HepG2 (cell line): ENCODE measurements at regions of chr17 and their contacts with region 1.

Region 1: GRCh38 chr17:59619293-59620063 is at the start of gene CLTC:
- DNase-seq: peak; percentile 97
- ATAC-seq: peak; percentile 95
- H3K4me3 ChIP-seq: peak within 1 kb of the TSS; percentile 94 to 99 (median 94)
- H3K27ac ChIP-seq: peak within 1 kb of the TSS; percentile 97
- H3K4me1 ChIP-seq: peaks cover 47% of the 10 kb centered on the region
- H3K27me3 ChIP-seq: no peaks in the 10 kb centered on the region; a peak in 2 of 5 replicates
- CTCF ChIP-seq: peak; percentile 21; the same call in 1 of the 2 replicates
- EP300 ChIP-seq: peak; percentile 64 to 84
- POLR2A ChIP-seq: peak; percentile 78 to 97
- RAD21 ChIP-seq: peak; percentile 44
- total RNA-seq, gene CLTC: 283 and 643 TPM in 2 replicates

Region 2: GRCh38 chr17:59464246-59464645 is 155.2 kb before region 1 on chr17:
- CTCF ChIA-PET with region 1: no interaction called
- POLR2A ChIA-PET with region 1: interaction called, 7 read pairs
- in situ Hi-C with region 1: no loop called
- intact Hi-C with region 1: loop called (anchors 2 kb)
- DNase-seq: no peak
- ATAC-seq: no peak
- H3K4me3 ChIP-seq: no peak overlapping the region
- H3K27ac ChIP-seq: peak overlapping the region; percentile 70
- H3K4me1 ChIP-seq: peaks cover 78% of the 10 kb centered on the region
- H3K27me3 ChIP-seq: no peaks in the 10 kb centered on the region
- CTCF ChIP-seq: no peak
- EP300 ChIP-seq: no peak
- POLR2A ChIP-seq: no peak
- RAD21 ChIP-seq: no peak

Region 3: GRCh38 chr17:59565171-59565969 is 54.1 kb before region 1 on chr17 and contains the start of gene DHX40:
- CTCF ChIA-PET with region 1: no interaction called
- POLR2A ChIA-PET with region 1: interaction called, 17 read pairs
- in situ Hi-C with region 1: no loop called
- intact Hi-C with region 1: no loop called
- DNase-seq: peak; percentile 82
- ATAC-seq: peak; percentile 73
- H3K4me3 ChIP-seq: peak within 1 kb of the TSS; percentile 88 to 95 (median 88)
- H3K27ac ChIP-seq: peak within 1 kb of the TSS; percentile 29
- H3K4me1 ChIP-seq: peaks cover 16% of the 10 kb centered on the region
- H3K27me3 ChIP-seq: no peaks in the 10 kb centered on the region; a peak in 1 of 5 replicates
- CTCF ChIP-seq: no peak; the same call in none of the 2 replicates
- EP300 ChIP-seq: 0 out of 4 replicates have a peak, but pooled peaks of 1 of the 2 experiments have one; percentile 30
- POLR2A ChIP-seq: peak; percentile 61 to 68; a peak in 3 of 4 replicates
- RAD21 ChIP-seq: no peak
- total RNA-seq, gene DHX40: 37.0 and 62.6 TPM in 2 replicates

Region 4: DNA sequence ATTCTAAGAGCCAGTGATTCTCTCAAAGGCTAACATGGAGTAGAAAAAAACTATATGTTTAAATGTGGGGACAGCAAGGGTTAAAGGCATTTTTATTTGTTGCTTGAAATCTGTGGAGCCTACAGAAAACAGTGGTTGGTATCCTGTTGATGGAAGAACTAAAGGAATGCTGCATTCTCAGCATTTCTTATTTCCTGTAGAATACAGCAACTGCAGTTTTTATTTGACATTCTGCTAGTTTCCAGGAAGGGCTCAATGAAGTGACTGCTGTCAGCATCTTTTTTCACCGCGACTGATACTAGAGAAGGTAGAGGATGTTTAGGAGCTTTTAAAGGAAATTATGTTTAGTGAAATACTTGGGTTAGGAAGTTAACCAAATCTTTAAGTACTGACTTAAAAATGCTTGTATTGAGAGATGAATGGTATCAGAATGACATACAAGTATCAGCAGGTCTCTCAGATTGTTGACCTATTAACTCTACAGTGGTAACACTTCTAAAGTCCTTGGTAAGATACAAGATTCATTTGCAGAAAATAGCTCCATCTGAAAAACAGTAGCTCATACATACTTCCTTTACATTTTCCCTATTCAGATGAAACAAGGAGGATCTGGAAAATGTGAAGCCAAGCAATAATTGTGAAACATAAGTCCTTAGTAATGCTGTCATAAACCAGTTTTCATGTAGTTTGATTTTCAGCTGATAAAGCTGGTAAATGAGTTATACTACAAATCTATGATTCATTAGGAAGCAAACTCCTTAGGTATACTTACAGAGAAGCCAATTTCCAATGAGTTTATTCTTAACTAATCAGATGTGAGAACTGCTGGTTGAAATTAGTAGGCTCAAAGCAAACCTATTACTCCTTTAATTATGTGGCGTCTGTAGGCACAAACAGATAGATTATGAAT is 15.4 kb after region 1 on chr17:
- CTCF ChIA-PET with region 1: no interaction called
- POLR2A ChIA-PET with region 1: interaction called, 17 read pairs
- in situ Hi-C with region 1: no loop called
- intact Hi-C with region 1: no loop called
- DNase-seq: no peak
- ATAC-seq: no peak
- H3K4me3 ChIP-seq: no peak overlapping the region
- H3K27ac ChIP-seq: no peak overlapping the region
- H3K4me1 ChIP-seq: peaks cover 37% of the 10 kb centered on the region; the same call in 1 of the 2 replicates
- H3K27me3 ChIP-seq: no peaks in the 10 kb centered on the region
- CTCF ChIP-seq: no peak
- EP300 ChIP-seq: no peak
- POLR2A ChIP-seq: no peak
- RAD21 ChIP-seq: no peak

Region 5: GRCh38 chr17:59651346-59651745 is 31.9 kb after region 1 on chr17:
- CTCF ChIA-PET with region 1: no interaction called
- POLR2A ChIA-PET with region 1: no interaction called
- in situ Hi-C with region 1: no loop called
- intact Hi-C with region 1: no loop called
- DNase-seq: no peak
- ATAC-seq: no peak
- H3K4me3 ChIP-seq: no peak overlapping the region
- H3K27ac ChIP-seq: no peak overlapping the region
- H3K4me1 ChIP-seq: no peaks in the 10 kb centered on the region
- H3K27me3 ChIP-seq: no peaks in the 10 kb centered on the region
- CTCF ChIP-seq: no peak
- EP300 ChIP-seq: no peak
- POLR2A ChIP-seq: no peak
- RAD21 ChIP-seq: no peak

Region 6: GRCh38 chr17:59815965-59816364 is 196.5 kb after region 1 on chr17:
- CTCF ChIA-PET with region 1: no interaction called
- POLR2A ChIA-PET with region 1: no interaction called
- in situ Hi-C with region 1: no loop called
- intact Hi-C with region 1: no loop called
- DNase-seq: no peak
- ATAC-seq: no peak
- H3K4me3 ChIP-seq: no peak overlapping the region
- H3K27ac ChIP-seq: no peak overlapping the region
- H3K4me1 ChIP-seq: peaks cover 10% of the 10 kb centered on the region
- H3K27me3 ChIP-seq: no peaks in the 10 kb centered on the region
- CTCF ChIP-seq: no peak
- EP300 ChIP-seq: no peak
- POLR2A ChIP-seq: no peak
- RAD21 ChIP-seq: no peak

Region 7: GRCh38 chr17:60463157-60463835 is 843.8 kb after region 1 on chr17:
- CTCF ChIA-PET with region 1: no interaction called
- POLR2A ChIA-PET with region 1: no interaction called
- in situ Hi-C with region 1: no loop called
- intact Hi-C with region 1: no loop called
- DNase-seq: no peak
- ATAC-seq: no peak
- H3K4me3 ChIP-seq: no peak overlapping the region
- H3K27ac ChIP-seq: no peak overlapping the region
- H3K4me1 ChIP-seq: no peaks in the 10 kb centered on the region
- H3K27me3 ChIP-seq: no peaks in the 10 kb centered on the region
- CTCF ChIP-seq: no peak
- EP300 ChIP-seq: no peak
- POLR2A ChIP-seq: no peak
- RAD21 ChIP-seq: no peak